ENCODE measurements at regions of chr3 and their contacts with region 1.

Region 1: GRCh38 chr3:72629191-72629631 is 219.0 kb downstream of the SHQ1 start:
- DNase-seq: no peak
- H3K4me3 Mint-ChIP-seq: peak overlapping the region; percentile 1
- H3K27ac Mint-ChIP-seq: peak overlapping the region; percentile 89
- H3K4me1 Mint-ChIP-seq: peaks cover 64% of the 10 kb centered on the region
- H3K27me3 Mint-ChIP-seq: peaks cover 3% of the 10 kb centered on the region

Region 2: DNA sequence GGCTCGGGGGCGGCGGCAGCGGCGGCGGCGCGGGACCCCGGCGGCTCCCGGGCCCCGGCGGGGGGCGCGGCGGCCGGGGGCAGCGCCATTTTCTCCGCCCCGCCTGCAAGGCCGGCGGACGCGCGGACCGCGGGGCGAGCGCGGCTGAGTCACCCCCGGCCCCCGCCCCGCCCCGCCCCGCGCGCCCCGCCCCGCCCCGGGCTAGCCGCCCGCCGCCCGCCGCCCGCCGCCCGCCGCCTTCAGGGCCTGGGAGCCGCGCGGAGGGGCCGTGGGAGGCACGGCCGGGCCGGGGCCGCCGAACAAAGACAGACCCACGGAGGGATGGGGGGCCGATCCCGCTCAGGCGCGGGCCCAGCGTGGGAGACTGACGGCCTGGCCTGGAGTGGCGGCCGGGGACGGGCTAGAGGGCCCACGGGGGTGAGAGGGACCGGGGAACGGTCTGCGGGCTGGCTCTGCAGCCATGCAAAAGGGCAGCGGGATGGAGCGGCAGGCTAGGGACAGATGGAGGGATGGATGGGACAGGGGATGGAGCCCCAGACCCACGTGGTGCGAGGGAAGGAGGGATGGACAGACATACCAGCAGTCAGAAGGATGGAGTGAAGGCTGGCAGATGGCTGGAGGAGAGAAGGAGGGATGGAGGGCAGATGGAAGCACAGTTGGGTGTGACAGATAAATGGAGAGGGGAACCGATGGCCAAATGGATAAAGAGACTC is 903.8 kb before region 1 on chr3 and contains the start of gene EIF4E3:
- intact Hi-C with region 1: loop called (anchors 10 kb)
- DNase-seq: peak; percentile 43
- H3K4me3 Mint-ChIP-seq: peak within 1 kb of the TSS; percentile 90
- H3K27ac Mint-ChIP-seq: peak within 1 kb of the TSS; percentile 95
- H3K4me1 Mint-ChIP-seq: peaks cover 75% of the 10 kb centered on the region
- H3K27me3 Mint-ChIP-seq: no peaks in the 10 kb centered on the region
- total RNA-seq, gene EIF4E3: 20.6 and 21.8 TPM in 2 replicates

Region 3: DNA sequence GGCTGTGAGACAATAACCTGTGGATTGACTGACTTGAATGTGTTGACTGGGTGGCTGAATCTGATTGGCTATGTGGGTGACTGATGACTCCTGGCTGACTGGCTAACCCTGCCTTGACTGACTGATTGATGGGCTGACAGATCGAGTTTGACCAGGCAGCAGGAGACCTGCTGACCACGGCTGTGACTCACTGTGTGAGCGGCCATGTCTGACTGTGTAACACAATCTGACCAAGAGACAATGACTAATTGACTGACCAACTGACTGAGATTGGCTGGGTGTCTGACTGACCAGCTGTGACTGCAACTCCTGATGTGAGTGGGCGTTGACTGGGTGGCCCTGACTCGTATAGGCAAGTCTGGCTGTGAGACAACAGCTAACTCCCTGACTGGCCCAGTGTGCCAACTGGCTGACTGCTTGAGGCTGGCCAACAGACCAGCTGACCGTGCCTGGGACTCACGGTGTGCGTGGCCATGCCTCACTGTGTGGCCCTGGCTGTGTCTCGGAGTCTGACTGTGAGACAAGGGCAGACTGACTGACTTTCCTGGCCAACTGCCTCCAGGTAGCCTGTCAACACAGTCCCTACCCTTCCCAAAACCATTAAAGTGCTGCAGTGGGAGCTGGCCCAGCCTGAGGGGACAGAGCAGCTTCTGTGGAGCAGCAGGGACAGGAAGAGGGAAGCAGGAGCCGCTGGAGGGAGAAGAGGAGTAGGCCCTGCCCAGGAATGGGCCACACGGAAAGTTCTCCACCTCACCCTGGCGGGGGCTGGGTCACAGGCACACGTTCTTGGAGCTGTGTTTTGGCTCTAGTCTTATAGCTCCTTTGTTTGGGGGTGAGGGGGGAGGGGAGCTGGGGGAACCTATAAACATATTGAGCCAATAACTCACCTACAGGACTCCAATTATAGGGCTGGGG is 289.8 kb before region 1 on chr3:
- intact Hi-C with region 1: loop called (anchors 2 kb)
- DNase-seq: no peak
- H3K4me3 Mint-ChIP-seq: no peak overlapping the region
- H3K27ac Mint-ChIP-seq: no peak overlapping the region
- H3K4me1 Mint-ChIP-seq: peaks cover 32% of the 10 kb centered on the region
- H3K27me3 Mint-ChIP-seq: peaks cover under 1% of the 10 kb centered on the region

Region 4: GRCh38 chr3:72426618-72427397 is 202.4 kb before region 1 on chr3:
- intact Hi-C with region 1: loop called (anchors 1 kb)
- DNase-seq: no peak
- H3K4me3 Mint-ChIP-seq: peak overlapping the region; percentile 69
- H3K27ac Mint-ChIP-seq: peak overlapping the region; percentile 97
- H3K4me1 Mint-ChIP-seq: peaks cover 62% of the 10 kb centered on the region
- H3K27me3 Mint-ChIP-seq: no peaks in the 10 kb centered on the region

Region 5: DNA sequence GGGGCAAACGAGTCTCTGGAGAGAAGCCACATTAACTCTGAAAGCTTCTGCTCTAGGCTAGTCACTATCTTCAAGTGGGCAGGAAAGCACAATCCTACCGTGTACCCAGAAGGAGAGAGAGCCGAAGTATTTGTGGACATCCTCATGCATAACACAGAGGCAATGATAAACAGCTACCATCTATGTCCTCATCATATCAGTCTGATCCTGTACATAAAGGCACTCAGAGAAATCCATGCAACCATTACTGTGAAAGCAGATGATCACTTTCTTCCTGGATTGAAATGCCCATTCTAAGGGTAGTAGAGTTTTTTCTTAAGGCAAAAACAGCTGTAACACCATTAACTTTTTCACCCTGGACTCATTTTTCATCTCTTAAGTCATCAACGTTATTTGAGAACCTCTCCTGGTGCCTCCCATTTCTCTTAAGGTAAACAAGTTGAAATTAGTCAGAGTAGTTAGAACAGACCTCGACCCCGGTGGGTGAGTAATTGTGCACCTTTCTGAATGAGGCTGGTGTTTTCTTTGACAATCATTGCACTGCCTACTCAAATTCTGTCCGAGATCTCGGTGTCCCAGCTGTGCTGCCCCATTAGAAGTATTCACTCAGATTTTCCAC is 108.4 kb before region 1 on chr3:
- intact Hi-C with region 1: loop called (anchors 1 kb)
- DNase-seq: peak; percentile 20
- H3K4me3 Mint-ChIP-seq: peak overlapping the region; percentile 16
- H3K27ac Mint-ChIP-seq: peak overlapping the region; percentile 88
- H3K4me1 Mint-ChIP-seq: peaks cover 56% of the 10 kb centered on the region
- H3K27me3 Mint-ChIP-seq: no peaks in the 10 kb centered on the region

Region 6: GRCh38 chr3:72591522-72592421 is 37.4 kb before region 1 on chr3:
- intact Hi-C with region 1: no loop called
- DNase-seq: no peak
- H3K4me3 Mint-ChIP-seq: no peak overlapping the region
- H3K27ac Mint-ChIP-seq: no peak overlapping the region
- H3K4me1 Mint-ChIP-seq: peaks cover 10% of the 10 kb centered on the region
- H3K27me3 Mint-ChIP-seq: no peaks in the 10 kb centered on the region

Region 7: DNA sequence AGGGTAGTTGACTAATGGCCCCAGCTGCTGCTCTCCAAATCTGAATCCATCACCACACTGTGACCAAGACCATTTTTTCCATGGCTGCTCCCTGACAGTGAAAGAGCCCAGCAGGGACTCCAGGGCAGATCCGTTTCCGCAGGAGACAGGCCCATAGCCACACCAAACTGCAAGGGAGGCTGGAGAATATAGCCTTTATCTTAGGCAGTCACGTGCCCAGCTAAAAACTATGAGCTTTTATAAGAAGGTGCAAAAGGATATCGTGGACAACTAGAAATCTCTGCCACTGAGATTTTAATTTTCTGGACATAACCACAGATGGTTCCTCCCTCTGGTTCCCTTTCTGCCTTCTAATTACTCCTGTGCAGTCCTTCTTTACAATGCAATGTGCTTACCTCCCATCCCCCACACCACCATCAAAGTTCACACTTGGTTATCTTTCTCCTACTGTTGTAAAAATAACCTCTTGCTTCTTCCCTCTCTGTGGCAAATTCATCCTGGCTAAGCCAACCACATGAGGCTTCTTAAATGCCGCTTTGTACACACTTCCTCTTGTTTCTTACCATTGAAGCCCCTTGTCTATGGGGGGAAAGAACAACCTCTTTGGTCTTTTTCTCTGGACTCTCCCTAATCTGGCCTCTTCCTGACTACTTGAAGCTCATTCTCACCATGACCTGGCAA is 14.7 kb before region 1 on chr3:
- intact Hi-C with region 1: no loop called
- DNase-seq: no peak
- H3K4me3 Mint-ChIP-seq: no peak overlapping the region
- H3K27ac Mint-ChIP-seq: peak overlapping the region; percentile 67
- H3K4me1 Mint-ChIP-seq: peaks cover 17% of the 10 kb centered on the region
- H3K27me3 Mint-ChIP-seq: no peaks in the 10 kb centered on the region

Region 8: GRCh38 chr3:72756900-72757299 is 127.7 kb after region 1 on chr3:
- intact Hi-C with region 1: loop called (anchors 2 kb)
- DNase-seq: peak; percentile 38
- H3K4me3 Mint-ChIP-seq: peak overlapping the region; percentile 34
- H3K27ac Mint-ChIP-seq: peak overlapping the region; percentile 64
- H3K4me1 Mint-ChIP-seq: peaks cover 50% of the 10 kb centered on the region
- H3K27me3 Mint-ChIP-seq: no peaks in the 10 kb centered on the region

Region 9: GRCh38 chr3:72862314-72863090 is 233.3 kb after region 1 on chr3:
- intact Hi-C with region 1: no loop called
- DNase-seq: no peak
- H3K4me3 Mint-ChIP-seq: no peak overlapping the region
- H3K27ac Mint-ChIP-seq: no peak overlapping the region
- H3K4me1 Mint-ChIP-seq: no peaks in the 10 kb centered on the region
- H3K27me3 Mint-ChIP-seq: peaks cover 3% of the 10 kb centered on the region

Region 10: DNA sequence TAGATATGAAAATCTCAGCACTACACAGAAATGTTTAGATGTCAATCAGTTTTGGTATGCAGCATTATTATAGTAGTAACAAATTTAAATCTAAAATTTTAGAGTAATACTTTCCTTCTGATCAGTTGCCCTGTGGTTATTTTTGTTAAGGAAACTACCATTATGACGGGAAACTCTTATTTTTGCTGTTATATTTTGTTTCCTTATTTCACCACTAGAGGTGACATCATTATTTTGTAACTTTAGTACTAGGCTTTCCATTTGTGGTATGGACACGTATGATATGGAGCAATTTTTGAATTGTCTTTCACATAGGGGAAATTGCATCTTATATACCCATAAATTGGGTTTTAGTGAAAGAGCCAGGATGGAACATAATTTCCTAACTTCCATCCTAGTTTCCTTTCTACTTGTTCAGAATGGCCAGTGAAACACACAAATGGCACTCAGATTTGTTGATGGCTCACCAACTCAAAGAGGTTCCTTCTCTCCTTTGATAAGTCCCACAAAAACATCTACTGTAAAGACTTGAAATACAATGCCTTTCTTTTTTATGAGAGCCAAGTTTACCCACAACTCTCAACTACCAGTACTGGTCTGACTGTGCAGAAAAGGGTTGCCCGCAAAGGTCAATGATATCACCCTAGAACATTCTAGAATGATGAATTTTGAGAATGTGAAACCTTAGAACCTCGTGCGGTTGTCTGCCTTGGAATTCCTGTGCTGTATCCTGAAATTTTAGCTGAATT is 348.0 kb after region 1 on chr3:
- intact Hi-C with region 1: loop called (anchors 1 kb)
- DNase-seq: no peak
- H3K4me3 Mint-ChIP-seq: no peak overlapping the region
- H3K27ac Mint-ChIP-seq: peak overlapping the region; percentile 85
- H3K4me1 Mint-ChIP-seq: peaks cover 24% of the 10 kb centered on the region
- H3K27me3 Mint-ChIP-seq: peaks cover 4% of the 10 kb centered on the region

Measured in activated T-helper 1 cell treated with anti-CD3 and anti-CD28 coated beads, Interleukin-12 subunit alpha, Interleukin-12 subunit beta, Interleukin-2, Interleukin-4 antibody, amounts not matched to agents 30 ng/mL and 10 ng/mL and 1 ng/mL, durations not matched to agents 14 hours and 24 hours and 36 hours (primary cell).